ENCODE measurements at regions of chr5 and their contacts with region 1.

Region 1: DNA sequence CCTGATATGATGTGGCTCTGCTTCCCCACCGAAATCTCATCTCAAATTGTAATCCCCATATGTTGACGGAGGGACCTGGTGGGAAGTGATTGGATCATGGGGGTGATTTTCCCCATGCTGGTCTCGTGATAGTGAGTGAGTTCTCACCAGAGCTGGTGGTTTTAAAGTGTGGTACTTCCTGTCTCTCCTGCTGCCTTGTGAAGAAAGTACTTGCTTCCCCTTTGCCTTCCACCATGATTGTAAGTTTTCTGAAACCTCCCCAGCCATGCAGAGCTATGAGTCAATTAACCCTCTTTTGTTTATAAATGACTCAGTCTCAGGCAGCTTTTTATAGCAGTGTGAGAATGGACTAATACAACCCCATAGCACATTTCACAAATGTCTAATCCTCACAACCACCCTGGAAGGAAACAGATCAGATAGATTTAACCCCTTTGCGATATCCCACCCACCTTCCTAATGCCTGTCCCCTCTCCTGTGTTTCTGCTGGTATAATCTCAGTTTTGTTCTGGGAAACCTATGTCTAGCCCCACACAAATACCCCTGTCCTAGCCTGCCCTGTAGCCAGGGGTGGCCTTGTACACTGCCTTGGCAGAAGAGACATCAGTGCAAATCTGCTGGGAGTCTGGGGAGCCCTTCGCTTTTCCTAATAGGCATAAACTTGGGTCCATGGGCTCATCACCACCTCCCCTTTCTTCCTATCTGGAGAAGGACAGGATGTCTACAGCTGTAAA is 157.0 kb upstream of the RAI14 start:
- DNase-seq: peak; percentile 63
- H3K4me3 Mint-ChIP-seq: no peak overlapping the region
- H3K27ac Mint-ChIP-seq: peak overlapping the region; percentile 74
- H3K4me1 Mint-ChIP-seq: peaks cover 13% of the 10 kb centered on the region
- H3K27me3 Mint-ChIP-seq: peaks cover 18% of the 10 kb centered on the region

Region 2: DNA sequence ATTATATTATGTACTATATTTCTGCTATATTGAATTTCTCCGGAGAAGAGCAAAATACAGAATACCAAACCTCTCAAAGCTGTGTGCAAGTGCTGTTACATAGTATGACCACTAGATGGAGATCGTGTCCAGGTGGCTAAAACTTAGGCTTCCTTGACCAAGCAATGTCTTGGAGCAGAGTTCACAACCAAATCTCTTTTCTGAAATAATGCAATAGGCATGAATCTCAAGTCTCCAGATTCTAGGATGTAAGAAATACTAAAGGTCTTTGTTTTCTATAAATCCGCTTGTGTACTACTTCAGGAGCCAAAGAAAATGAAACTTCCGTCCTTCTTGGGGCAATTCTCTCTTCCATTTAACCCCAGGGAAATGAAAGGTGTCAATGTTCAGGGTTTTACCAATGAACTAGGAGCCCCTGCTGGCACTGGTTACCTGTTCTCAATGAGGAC is 24.6 kb before region 1 on chr5:
- CTCF ChIA-PET with region 1: interaction called, 10 read pairs
- intact Hi-C with region 1: no loop called
- DNase-seq: peak; percentile 34
- H3K4me3 Mint-ChIP-seq: no peak overlapping the region
- H3K27ac Mint-ChIP-seq: no peak overlapping the region
- H3K4me1 Mint-ChIP-seq: no peaks in the 10 kb centered on the region
- H3K27me3 Mint-ChIP-seq: peaks cover 11% of the 10 kb centered on the region

Region 3: GRCh38 chr5:34915139-34915855 is 416.1 kb after region 1 on chr5 and contains the starts of genes BRIX1 and RAD1:
- CTCF ChIA-PET with region 1: no interaction called
- intact Hi-C with region 1: loop called (anchors 1 kb)
- DNase-seq: peak; percentile 97
- H3K4me3 Mint-ChIP-seq: no peak within 1 kb of the TSS
- H3K27ac Mint-ChIP-seq: peak within 1 kb of the TSS; percentile 52
- H3K4me1 Mint-ChIP-seq: peaks cover 32% of the 10 kb centered on the region
- H3K27me3 Mint-ChIP-seq: no peaks in the 10 kb centered on the region
- total RNA-seq, gene BRIX1: 66.5 to 69.0 TPM
- total RNA-seq, gene RAD1: 38.8 to 40.7 TPM